T-cell (primary cell): ENCODE measurements at regions of chr13 and their contacts with region 1.

Region 1: GRCh38 chr13:49502954-49503353 is 7.2 kb downstream of the PHF11 start:
- DNase-seq: no peak
- ATAC-seq: no peak
- H3K4me3 ChIP-seq: no peak overlapping the region
- H3K4me3 Mint-ChIP-seq: no peak overlapping the region
- H3K27ac ChIP-seq: no peak overlapping the region
- H3K27ac Mint-ChIP-seq: peak overlapping the region; percentile 4 to 52
- H3K4me1 ChIP-seq: peaks cover 0 to 17% of the 10 kb centered on the region in 2 experiments
- H3K4me1 Mint-ChIP-seq: peaks cover 54 to 58% (median 57%) of the 10 kb centered on the region in 3 donors
- H3K27me3 ChIP-seq: no peaks in the 10 kb centered on the region
- H3K27me3 Mint-ChIP-seq: no peaks in the 10 kb centered on the region

Region 2: DNA sequence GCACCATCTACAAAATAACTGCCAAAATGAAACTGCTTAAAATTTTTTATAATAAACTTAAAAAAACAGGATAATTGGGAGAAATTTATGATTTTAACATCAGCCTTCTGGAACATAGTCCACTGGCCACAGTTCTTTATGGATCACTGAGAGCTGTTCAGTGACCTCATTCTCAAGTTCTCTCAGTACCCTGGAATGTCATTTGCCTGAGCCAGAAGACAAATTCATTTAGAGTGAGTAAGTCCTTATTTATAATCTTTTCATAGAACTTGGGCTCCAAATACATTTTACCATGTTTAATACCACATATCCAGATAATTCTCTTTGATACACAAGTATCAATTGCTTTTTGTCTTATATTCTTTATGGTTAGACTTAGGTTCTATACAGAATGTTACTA is 146.7 kb before region 1 on chr13:
- CTCF ChIA-PET with region 1: no interaction called
- POLR2A ChIA-PET with region 1: no interaction called
- DNase-seq: no peak
- ATAC-seq: no peak
- H3K4me3 ChIP-seq: no peak overlapping the region
- H3K4me3 Mint-ChIP-seq: no peak overlapping the region
- H3K27ac ChIP-seq: no peak overlapping the region
- H3K27ac Mint-ChIP-seq: no peak overlapping the region
- H3K4me1 ChIP-seq: no peaks in the 10 kb centered on the region
- H3K4me1 Mint-ChIP-seq: no peaks in the 10 kb centered on the region
- H3K27me3 ChIP-seq: no peaks in the 10 kb centered on the region
- H3K27me3 Mint-ChIP-seq: no peaks in the 10 kb centered on the region

Region 3: DNA sequence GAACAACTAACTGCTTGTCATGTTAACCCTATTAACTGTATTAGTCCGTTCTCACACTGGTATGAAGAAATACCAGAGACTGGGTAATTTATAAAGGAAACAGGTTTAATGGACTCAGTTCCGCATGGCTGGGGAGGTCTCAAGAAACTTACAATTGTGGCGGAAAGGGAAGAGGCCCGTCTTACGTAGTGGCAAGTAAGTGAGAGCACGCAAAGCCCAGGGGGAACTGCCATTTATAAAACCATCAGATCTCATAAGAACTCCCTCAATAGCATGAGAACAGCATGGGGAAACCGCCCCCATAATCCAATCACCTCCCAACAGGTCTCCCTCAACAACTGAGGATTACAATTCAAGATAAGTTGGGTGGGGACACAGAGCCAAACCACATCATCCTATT is 27.5 kb after region 1 on chr13:
- CTCF ChIA-PET with region 1: no interaction called
- POLR2A ChIA-PET with region 1: no interaction called
- DNase-seq: no peak
- ATAC-seq: no peak
- H3K4me3 ChIP-seq: no peak overlapping the region
- H3K4me3 Mint-ChIP-seq: no peak overlapping the region
- H3K27ac ChIP-seq: no peak overlapping the region
- H3K27ac Mint-ChIP-seq: peak overlapping the region; percentile 31 to 48
- H3K4me1 ChIP-seq: no peaks in the 10 kb centered on the region
- H3K4me1 Mint-ChIP-seq: peaks cover 5 to 24% (median 11%) of the 10 kb centered on the region in 3 donors
- H3K27me3 ChIP-seq: no peaks in the 10 kb centered on the region
- H3K27me3 Mint-ChIP-seq: no peaks in the 10 kb centered on the region

Region 4: GRCh38 chr13:49540552-49540951 is 37.6 kb after region 1 on chr13:
- CTCF ChIA-PET with region 1: no interaction called
- POLR2A ChIA-PET with region 1: no interaction called
- DNase-seq: peak in 7 of 35 experiments; percentile 2 to 27 (median 12)
- ATAC-seq: peak; percentile 63 to 74 (median 67)
- H3K4me3 ChIP-seq: peak overlapping the region in 1 of 2 donors; percentile 33
- H3K4me3 Mint-ChIP-seq: peak overlapping the region; percentile 71 to 79 (median 72)
- H3K27ac ChIP-seq: peak overlapping the region; percentile 22
- H3K27ac Mint-ChIP-seq: peak overlapping the region; percentile 87 to 95
- H3K4me1 ChIP-seq: peaks cover 5 to 13% of the 10 kb centered on the region in 2 experiments
- H3K4me1 Mint-ChIP-seq: peaks cover 22 to 26% (median 24%) of the 10 kb centered on the region in 3 donors
- H3K27me3 ChIP-seq: no peaks in the 10 kb centered on the region
- H3K27me3 Mint-ChIP-seq: no peaks in the 10 kb centered on the region

Region 5: GRCh38 chr13:50344717-50345116 is 841.8 kb after region 1 on chr13:
- CTCF ChIA-PET with region 1: no interaction called
- POLR2A ChIA-PET with region 1: interaction called in 1 of 2 experiments, 12 read pairs
- DNase-seq: no peak
- ATAC-seq: no peak
- H3K4me3 ChIP-seq: no peak overlapping the region
- H3K4me3 Mint-ChIP-seq: no peak overlapping the region
- H3K27ac ChIP-seq: no peak overlapping the region
- H3K27ac Mint-ChIP-seq: no peak overlapping the region
- H3K4me1 ChIP-seq: peaks cover 3% of the 10 kb centered on the region in 2 experiments
- H3K4me1 Mint-ChIP-seq: peaks cover 7 to 11% (median 8%) of the 10 kb centered on the region in 3 donors
- H3K27me3 ChIP-seq: peaks cover 0 to 2% of the 10 kb centered on the region in 2 experiments
- H3K27me3 Mint-ChIP-seq: peaks cover 8 to 12% of the 10 kb centered on the region in 2 donors